MCF 10A (cell line): ENCODE measurements at regions of chr18 and their contacts with region 1.

Region 1: DNA sequence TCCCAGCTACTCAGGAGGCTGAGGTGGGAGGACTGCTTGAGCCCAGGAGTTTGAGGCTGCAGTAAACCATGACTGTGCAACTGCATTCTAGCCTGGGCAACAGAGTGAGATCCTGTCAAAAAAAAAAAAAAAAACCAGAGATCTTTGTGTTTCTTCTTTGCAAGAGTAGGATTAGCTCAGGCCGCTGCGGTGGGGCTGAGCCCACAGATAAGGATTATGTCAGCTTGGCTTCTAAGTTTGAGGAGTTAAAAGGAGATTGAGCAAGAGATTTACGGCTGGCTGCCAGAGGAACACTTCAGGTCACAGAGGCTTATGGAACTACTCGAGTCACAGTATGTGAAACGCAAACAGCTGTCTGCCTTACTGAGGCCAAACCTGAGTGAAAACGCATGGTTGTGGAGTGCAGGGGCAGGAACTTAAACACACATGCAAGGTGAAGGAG is 146.7 kb upstream of the L3MBTL4 start:
- DNase-seq: peak; percentile 38
- H3K4me3 Mint-ChIP-seq: no peak overlapping the region
- H3K27ac Mint-ChIP-seq: no peak overlapping the region
- H3K4me1 Mint-ChIP-seq: peaks cover 14% of the 10 kb centered on the region
- H3K27me3 Mint-ChIP-seq: no peaks in the 10 kb centered on the region
- CTCF ChIP-seq: no peak

Region 2: DNA sequence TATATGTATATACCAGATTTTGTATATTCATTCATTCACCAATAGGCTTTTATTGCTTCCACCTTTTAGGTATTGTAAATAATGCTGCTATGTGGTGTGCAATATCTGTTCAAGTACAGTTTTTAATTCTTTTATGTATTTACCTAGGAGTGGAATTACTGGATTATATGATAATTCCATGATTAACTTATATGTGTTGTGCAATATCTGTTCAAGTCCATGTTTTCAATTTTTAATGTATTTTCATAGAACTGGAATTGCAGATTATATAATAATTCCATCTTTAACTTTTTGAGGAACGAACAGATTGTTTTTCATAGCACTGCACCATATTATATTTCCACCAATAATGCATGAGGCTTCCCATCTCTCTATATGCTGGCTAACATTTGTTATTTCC is 96.2 kb before region 1 on chr18:
- CTCF ChIA-PET with region 1: no interaction called
- POLR2A ChIA-PET with region 1: no interaction called
- intact Hi-C with region 1: no loop called
- DNase-seq: no peak
- H3K4me3 Mint-ChIP-seq: no peak overlapping the region
- H3K27ac Mint-ChIP-seq: no peak overlapping the region
- H3K4me1 Mint-ChIP-seq: no peaks in the 10 kb centered on the region
- H3K27me3 Mint-ChIP-seq: peaks cover 14% of the 10 kb centered on the region
- CTCF ChIP-seq: no peak

Region 3: DNA sequence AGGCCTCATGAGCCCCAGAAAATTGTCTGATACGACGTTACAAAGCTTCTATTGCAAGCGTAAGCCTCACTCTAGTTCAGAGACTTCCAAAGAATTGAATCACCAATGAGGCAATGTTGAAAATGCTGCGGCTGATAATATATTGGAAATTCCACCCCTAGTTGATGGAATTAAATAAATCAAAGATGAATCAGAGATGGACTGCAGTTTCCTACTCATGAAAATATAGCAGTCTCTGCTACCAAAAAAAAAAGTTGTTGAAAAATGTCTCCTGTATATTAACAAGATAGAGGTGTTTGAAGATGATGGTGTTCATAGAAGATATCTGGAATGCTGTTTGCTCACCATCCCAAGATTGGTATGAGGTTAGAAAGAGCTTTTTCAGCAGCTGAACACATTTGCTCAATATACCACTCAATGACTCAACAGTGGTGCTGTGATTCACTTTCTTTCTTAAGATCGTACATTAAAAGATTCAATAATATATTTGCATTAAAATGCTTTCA is 68.2 kb after region 1 on chr18:
- CTCF ChIA-PET with region 1: no interaction called
- POLR2A ChIA-PET with region 1: interaction called, 5 read pairs
- intact Hi-C with region 1: loop called (anchors 5 kb)
- DNase-seq: peak; percentile 50
- H3K4me3 Mint-ChIP-seq: peak overlapping the region; percentile 34
- H3K27ac Mint-ChIP-seq: peak overlapping the region; percentile 90
- H3K4me1 Mint-ChIP-seq: peaks cover 30% of the 10 kb centered on the region
- H3K27me3 Mint-ChIP-seq: no peaks in the 10 kb centered on the region
- CTCF ChIP-seq: no peak

Region 4: GRCh38 chr18:6648581-6648980 is 87.1 kb after region 1 on chr18:
- CTCF ChIA-PET with region 1: no interaction called
- POLR2A ChIA-PET with region 1: no interaction called
- intact Hi-C with region 1: no loop called
- DNase-seq: peak; percentile 8
- H3K4me3 Mint-ChIP-seq: no peak overlapping the region
- H3K27ac Mint-ChIP-seq: no peak overlapping the region
- H3K4me1 Mint-ChIP-seq: peaks cover 12% of the 10 kb centered on the region
- H3K27me3 Mint-ChIP-seq: no peaks in the 10 kb centered on the region
- CTCF ChIP-seq: no peak

Region 5: GRCh38 chr18:6741232-6741663 is 179.8 kb after region 1 on chr18:
- CTCF ChIA-PET with region 1: no interaction called
- POLR2A ChIA-PET with region 1: interaction called, 4 read pairs
- intact Hi-C with region 1: loop called (anchors 10 kb)
- DNase-seq: peak; percentile 94
- H3K4me3 Mint-ChIP-seq: no peak overlapping the region
- H3K27ac Mint-ChIP-seq: peak overlapping the region; percentile 64
- H3K4me1 Mint-ChIP-seq: peaks cover 31% of the 10 kb centered on the region
- H3K27me3 Mint-ChIP-seq: no peaks in the 10 kb centered on the region
- CTCF ChIP-seq: no peak